ENCODE measurements at regions of chr21 and their contacts with region 1.

Region 1: GRCh38 chr21:34524671-34525601 is 12.9 kb upstream of the KCNE1 start:
- DNase-seq: no peak
- H3K4me3 ChIP-seq: peak overlapping the region; percentile 49 to 58 (median 52)
- H3K27ac ChIP-seq: peak overlapping the region; percentile 85 to 89 (median 86)
- H3K4me1 ChIP-seq: peaks cover 53 to 74% (median 69%) of the 10 kb centered on the region in 4 donors
- H3K27me3 ChIP-seq: no peaks in the 10 kb centered on the region
- CTCF ChIP-seq: no peak
- EP300 ChIP-seq: no peak
- POLR2A ChIP-seq: no peak

Region 2: GRCh38 chr21:34598931-34599400 is 74.0 kb after region 1 on chr21:
- intact Hi-C with region 1: loop called (anchors 5 kb)
- DNase-seq: no peak
- H3K4me3 ChIP-seq: no peak overlapping the region
- H3K27ac ChIP-seq: no peak overlapping the region
- H3K4me1 ChIP-seq: peaks cover 22 to 42% (median 38%) of the 10 kb centered on the region in 4 donors
- H3K27me3 ChIP-seq: no peaks in the 10 kb centered on the region
- CTCF ChIP-seq: no peak
- EP300 ChIP-seq: no peak
- POLR2A ChIP-seq: no peak

Measured in esophagus muscularis mucosa (tissue), 4 donors.